CD4-positive, alpha-beta memory T cell (primary cell): ENCODE measurements at regions of chr2 and their contacts with region 1.

Region 1: DNA sequence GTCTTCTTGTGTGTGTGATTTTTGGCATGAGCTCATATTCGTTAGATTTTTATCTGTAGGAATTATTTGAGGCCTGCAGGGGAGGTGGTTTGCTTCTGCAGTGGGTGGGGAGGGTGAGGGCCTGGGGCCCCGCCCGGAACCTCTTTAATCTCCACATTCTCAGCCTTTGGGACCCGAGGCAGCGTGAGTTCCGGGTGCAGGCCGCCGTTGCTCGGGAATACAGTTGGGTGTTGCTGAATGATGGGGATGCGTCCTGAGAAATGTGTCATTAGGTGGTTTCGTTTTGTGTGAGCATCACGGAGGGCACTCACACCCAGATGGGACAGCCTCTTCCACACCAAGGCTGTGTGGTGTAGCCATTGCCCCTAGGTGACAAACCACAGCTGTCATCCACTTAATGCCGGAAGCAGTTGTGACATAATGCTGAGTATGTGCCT is 13.7 kb upstream of the GAL3ST2 start:
- DNase-seq: peak; percentile 78 to 92 (median 85)
- H3K4me3 ChIP-seq: peak overlapping the region in 1 of 2 donors; percentile 46
- H3K4me3 Mint-ChIP-seq: peak overlapping the region; percentile 59 to 85 (median 83)
- H3K27ac ChIP-seq: peak overlapping the region; percentile 56
- H3K27ac Mint-ChIP-seq: peak overlapping the region; percentile 89 to 99 (median 97)
- H3K4me1 ChIP-seq: peaks cover 42% of the 10 kb centered on the region
- H3K4me1 Mint-ChIP-seq: peaks cover 27 to 51% (median 35%) of the 10 kb centered on the region in 4 donors
- H3K27me3 ChIP-seq: no peaks in the 10 kb centered on the region
- H3K27me3 Mint-ChIP-seq: no peaks in the 10 kb centered on the region

Region 2: DNA sequence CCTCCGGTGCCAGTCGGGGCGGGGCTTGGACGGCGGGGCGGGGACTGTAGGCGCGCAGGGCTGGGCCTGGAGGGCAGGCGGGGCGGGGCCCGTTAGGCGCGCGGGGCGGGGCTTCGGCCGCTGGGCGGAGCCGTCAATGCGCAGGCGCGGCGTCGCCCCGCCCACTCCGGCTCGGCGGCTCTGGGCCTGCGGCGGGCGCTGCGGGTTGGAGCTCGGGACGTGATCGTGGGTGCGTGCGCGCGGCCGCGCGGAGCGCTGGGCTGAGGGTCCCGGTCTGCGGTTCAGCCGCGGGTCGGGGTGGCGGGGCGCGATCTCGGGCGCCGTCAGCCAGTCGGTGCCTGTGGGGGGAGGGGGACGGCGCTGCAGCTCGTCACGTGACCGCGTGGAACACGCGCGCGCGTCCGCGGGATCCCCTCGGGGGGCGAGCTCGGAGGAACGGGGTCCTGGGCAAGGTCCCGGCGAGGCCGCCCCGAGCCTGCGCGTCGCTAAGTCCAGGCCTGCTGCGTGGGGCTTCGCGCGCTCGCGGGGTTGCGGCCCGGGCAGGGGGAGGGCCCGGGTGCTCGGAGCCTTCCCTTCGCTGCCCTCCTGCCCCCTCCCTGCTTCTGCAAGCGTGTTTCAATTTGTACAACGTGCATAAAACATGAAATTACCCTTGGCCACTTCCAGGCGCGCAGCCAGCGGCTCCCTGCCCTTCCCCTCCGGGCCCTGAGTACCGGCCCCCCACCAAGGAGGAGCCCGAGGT is 28.3 kb before region 1 on chr2 and contains the start of gene D2HGDH:
- CTCF ChIA-PET with region 1: interaction called, 5 read pairs
- POLR2A ChIA-PET with region 1: interaction called, 26 read pairs
- intact Hi-C with region 1: loop called (anchors 1 kb)
- DNase-seq: peak; percentile 89 to 95 (median 91)
- H3K4me3 ChIP-seq: peak within 1 kb of the TSS; percentile 34 to 93
- H3K4me3 Mint-ChIP-seq: peak within 1 kb of the TSS; percentile 79 to 89 (median 85)
- H3K27ac ChIP-seq: peak within 1 kb of the TSS; percentile 67
- H3K27ac Mint-ChIP-seq: peak within 1 kb of the TSS; percentile 57 to 90 (median 79)
- H3K4me1 ChIP-seq: peaks cover 17% of the 10 kb centered on the region
- H3K4me1 Mint-ChIP-seq: peaks cover 16 to 54% (median 30%) of the 10 kb centered on the region in 4 donors
- H3K27me3 ChIP-seq: no peaks in the 10 kb centered on the region
- H3K27me3 Mint-ChIP-seq: no peaks in the 10 kb centered on the region
- total RNA-seq, gene D2HGDH: 48.7 to 53.9 TPM

Region 3: GRCh38 chr2:241741016-241741415 is 21.9 kb before region 1 on chr2:
- CTCF ChIA-PET with region 1: no interaction called
- POLR2A ChIA-PET with region 1: interaction called, 19 read pairs
- intact Hi-C with region 1: no loop called
- DNase-seq: peak in 4 of 5 donors; percentile 48 to 76 (median 54)
- H3K4me3 ChIP-seq: no peak overlapping the region
- H3K4me3 Mint-ChIP-seq: peak overlapping the region; percentile 40 to 82 (median 67)
- H3K27ac ChIP-seq: no peak overlapping the region
- H3K27ac Mint-ChIP-seq: peak overlapping the region; percentile 25 to 91 (median 75)
- H3K4me1 ChIP-seq: peaks cover 28% of the 10 kb centered on the region
- H3K4me1 Mint-ChIP-seq: peaks cover 21 to 41% (median 31%) of the 10 kb centered on the region in 4 donors
- H3K27me3 ChIP-seq: no peaks in the 10 kb centered on the region
- H3K27me3 Mint-ChIP-seq: no peaks in the 10 kb centered on the region

Region 4: GRCh38 chr2:241803387-241804325 is 40.7 kb after region 1 on chr2:
- CTCF ChIA-PET with region 1: no interaction called
- POLR2A ChIA-PET with region 1: interaction called, 10 read pairs
- intact Hi-C with region 1: loop called (anchors 5 kb)
- DNase-seq: peak; percentile 41 to 58 (median 48)
- H3K4me3 ChIP-seq: peak overlapping the region; percentile 36 to 47
- H3K4me3 Mint-ChIP-seq: peak overlapping the region; percentile 51 to 79 (median 71)
- H3K27ac ChIP-seq: no peak overlapping the region
- H3K27ac Mint-ChIP-seq: peak overlapping the region in 4 of 7 donors; percentile 35 to 87 (median 72)
- H3K4me1 ChIP-seq: peaks cover 20% of the 10 kb centered on the region
- H3K4me1 Mint-ChIP-seq: peaks cover 2 to 12% (median 8%) of the 10 kb centered on the region in 4 donors
- H3K27me3 ChIP-seq: no peaks in the 10 kb centered on the region
- H3K27me3 Mint-ChIP-seq: no peaks in the 10 kb centered on the region

Region 5: DNA sequence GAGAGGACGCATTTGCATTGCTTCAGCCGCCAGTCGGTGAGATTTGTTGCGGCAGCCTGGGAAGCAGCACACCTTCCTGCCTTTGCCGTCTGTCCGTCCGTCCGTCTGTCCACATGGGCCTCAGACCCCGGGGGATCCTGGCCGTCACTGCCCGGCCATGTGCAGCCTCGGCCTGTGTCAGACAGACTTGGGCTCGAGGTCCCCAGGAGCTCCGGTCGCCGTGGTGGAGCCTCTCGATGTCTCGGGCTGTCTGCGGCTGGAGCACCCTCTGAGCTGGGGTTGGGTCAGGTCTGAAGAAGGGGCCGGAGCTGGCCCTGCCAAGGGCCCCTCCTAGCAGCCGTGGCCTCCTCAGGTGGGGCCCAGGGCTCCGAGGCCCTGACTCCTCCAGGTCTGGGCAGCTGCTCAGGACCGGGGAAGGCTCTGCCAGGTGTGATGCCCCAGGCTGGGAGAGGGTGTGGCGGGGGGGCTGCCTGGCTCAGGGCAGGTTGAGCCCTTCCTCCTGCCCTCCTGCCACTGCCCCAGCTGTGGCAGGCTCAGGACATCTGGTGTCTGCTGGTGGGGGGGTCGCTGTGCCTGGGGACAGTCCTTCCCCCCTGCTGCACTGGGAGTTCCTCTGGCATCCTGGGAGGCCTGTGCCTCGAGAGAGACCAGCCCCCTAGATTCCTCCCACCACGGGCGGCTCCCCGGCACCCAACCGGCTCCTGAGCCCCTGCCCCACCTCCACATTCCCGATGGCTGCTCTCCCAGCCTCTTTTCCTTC is 57.9 kb after region 1 on chr2:
- CTCF ChIA-PET with region 1: no interaction called
- POLR2A ChIA-PET with region 1: no interaction called
- intact Hi-C with region 1: no loop called
- DNase-seq: no peak
- H3K4me3 ChIP-seq: no peak overlapping the region
- H3K4me3 Mint-ChIP-seq: peak overlapping the region in 1 of 8 donors; percentile 30
- H3K27ac ChIP-seq: no peak overlapping the region
- H3K27ac Mint-ChIP-seq: peak overlapping the region in 1 of 7 donors; percentile 90
- H3K4me1 ChIP-seq: peaks cover 15% of the 10 kb centered on the region
- H3K4me1 Mint-ChIP-seq: peaks cover 10 to 23% (median 17%) of the 10 kb centered on the region in 4 donors
- H3K27me3 ChIP-seq: no peaks in the 10 kb centered on the region
- H3K27me3 Mint-ChIP-seq: peaks cover 0 to 4% of the 10 kb centered on the region in 2 donors

Region 6: DNA sequence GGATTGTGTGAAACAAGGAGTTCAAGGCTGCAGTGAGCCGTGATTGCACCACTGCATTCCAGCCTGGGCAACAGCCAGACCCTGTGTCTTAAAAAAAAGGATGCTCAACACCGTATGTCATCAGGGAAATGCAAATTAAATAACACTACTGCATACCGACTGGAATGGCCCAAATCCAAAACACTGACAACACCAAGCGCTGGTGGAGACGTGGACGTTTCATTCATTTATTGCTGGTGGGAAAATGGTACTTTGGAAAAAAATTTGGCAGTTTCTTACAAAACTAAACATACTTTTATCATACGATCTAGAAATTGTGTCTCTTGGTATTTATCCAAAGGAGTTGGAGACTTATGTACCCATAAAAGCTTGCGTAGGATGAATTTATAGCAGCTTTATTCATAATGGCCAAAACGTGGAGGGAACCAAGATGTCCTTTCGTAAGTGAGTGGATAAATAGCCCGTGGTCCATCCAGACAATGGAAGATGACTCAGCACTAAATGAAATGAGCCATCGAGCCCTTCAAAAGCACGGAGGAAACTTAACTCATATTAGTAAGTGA is 70.2 kb after region 1 on chr2:
- CTCF ChIA-PET with region 1: no interaction called
- POLR2A ChIA-PET with region 1: no interaction called
- intact Hi-C with region 1: no loop called
- DNase-seq: no peak
- H3K4me3 ChIP-seq: no peak overlapping the region
- H3K4me3 Mint-ChIP-seq: no peak overlapping the region
- H3K27ac ChIP-seq: no peak overlapping the region
- H3K27ac Mint-ChIP-seq: no peak overlapping the region
- H3K4me1 ChIP-seq: no peaks in the 10 kb centered on the region
- H3K4me1 Mint-ChIP-seq: peaks cover 0 to 9% (median 2%) of the 10 kb centered on the region in 4 donors
- H3K27me3 ChIP-seq: no peaks in the 10 kb centered on the region
- H3K27me3 Mint-ChIP-seq: peaks cover 0 to 3% of the 10 kb centered on the region in 2 donors

Region 7: GRCh38 chr2:241844066-241844728 is 81.2 kb after region 1 on chr2:
- CTCF ChIA-PET with region 1: no interaction called
- POLR2A ChIA-PET with region 1: interaction called, 11 read pairs
- intact Hi-C with region 1: loop called (anchors 5 kb)
- DNase-seq: peak; percentile 71 to 84 (median 73)
- H3K4me3 ChIP-seq: no peak overlapping the region
- H3K4me3 Mint-ChIP-seq: peak overlapping the region; percentile 76 to 88 (median 84)
- H3K27ac ChIP-seq: peak overlapping the region; percentile 14
- H3K27ac Mint-ChIP-seq: peak overlapping the region; percentile 57 to 94 (median 81)
- H3K4me1 ChIP-seq: peaks cover 34% of the 10 kb centered on the region
- H3K4me1 Mint-ChIP-seq: peaks cover 20 to 42% (median 31%) of the 10 kb centered on the region in 4 donors
- H3K27me3 ChIP-seq: no peaks in the 10 kb centered on the region
- H3K27me3 Mint-ChIP-seq: no peaks in the 10 kb centered on the region

Region 8: DNA sequence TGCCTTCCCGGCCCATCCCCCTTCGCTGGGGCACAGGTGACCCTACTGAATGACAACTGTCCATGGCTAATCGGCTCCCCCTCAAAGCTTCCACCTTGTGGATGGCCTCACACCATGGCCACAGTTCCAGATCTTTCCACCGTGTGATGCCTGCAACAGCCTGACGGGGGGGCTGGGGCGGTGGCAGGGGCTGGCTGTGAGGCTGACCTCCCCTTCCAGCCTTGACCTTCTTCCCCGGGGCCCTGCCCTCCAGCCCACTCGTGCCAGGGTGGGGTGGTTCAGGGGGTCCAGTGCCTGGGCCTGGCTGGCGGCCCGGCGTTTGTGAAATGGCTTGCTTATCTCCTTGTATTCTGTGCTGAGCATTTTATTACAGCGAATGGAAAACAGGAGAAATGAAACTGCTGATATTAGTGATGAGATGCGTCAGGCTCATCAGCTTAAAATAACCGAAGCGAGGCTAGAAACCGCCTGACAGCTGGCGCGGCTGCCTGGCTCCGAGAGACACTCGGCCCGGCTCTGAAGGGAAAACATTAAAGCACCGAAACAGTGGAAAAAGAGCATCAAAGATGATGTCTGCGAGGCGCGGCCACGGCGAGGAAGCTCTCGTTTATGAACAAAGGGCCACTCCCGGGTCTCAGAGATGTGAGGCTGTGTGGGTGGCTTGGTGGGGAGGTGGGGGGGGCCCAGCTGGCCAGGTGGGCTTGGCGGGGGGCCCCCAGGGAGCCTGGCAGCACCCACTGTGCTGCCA is 96.7 kb after region 1 on chr2:
- CTCF ChIA-PET with region 1: interaction called, 7 read pairs
- POLR2A ChIA-PET with region 1: interaction called, 16 read pairs
- intact Hi-C with region 1: loop called (anchors 5 kb)
- DNase-seq: peak; percentile 26 to 71 (median 39)
- H3K4me3 ChIP-seq: peak overlapping the region; percentile 23 to 68
- H3K4me3 Mint-ChIP-seq: peak overlapping the region; percentile 87 to 96 (median 90)
- H3K27ac ChIP-seq: peak overlapping the region; percentile 64
- H3K27ac Mint-ChIP-seq: peak overlapping the region; percentile 92 to 98 (median 96)
- H3K4me1 ChIP-seq: peaks cover 84% of the 10 kb centered on the region
- H3K4me1 Mint-ChIP-seq: peaks cover 37 to 79% (median 55%) of the 10 kb centered on the region in 4 donors
- H3K27me3 ChIP-seq: no peaks in the 10 kb centered on the region
- H3K27me3 Mint-ChIP-seq: peaks cover 0 to 2% of the 10 kb centered on the region in 2 donors